Activated CD8-positive, alpha-beta T cell treated with anti-CD3 and anti-CD28 coated beads, Interleukin-2, amount 10 ng/mL, durations not matched to agents 7 days and 5 days (primary cell): ENCODE measurements at regions of chr4 and their contacts with region 1.

Region 1: DNA sequence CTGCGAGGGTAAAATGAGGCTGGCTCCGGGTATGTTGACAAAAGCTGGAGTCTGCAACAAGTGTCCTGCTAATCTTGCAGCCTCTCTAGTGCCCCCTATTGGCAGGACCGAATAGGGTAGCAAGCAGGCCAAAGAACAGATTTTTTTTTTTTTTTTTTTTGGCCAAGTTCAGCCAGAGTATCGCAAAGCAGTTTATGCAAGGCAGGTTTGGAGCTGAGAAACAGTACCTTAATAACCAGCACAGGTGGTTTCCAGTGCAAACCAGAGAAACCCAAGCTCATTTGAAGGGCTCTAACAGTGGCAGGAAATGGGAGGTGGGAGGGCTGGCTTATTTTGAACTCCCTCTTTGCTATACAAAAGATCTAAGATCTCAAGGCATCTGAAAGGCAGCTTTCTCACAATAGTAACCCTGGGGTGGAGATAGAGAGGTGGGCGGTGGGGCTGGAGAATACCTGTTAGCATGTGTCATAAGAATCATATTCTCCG is 38.2 kb upstream of the OCIAD2 start:
- DNase-seq: peak; percentile 66
- ATAC-seq: peak; percentile 36
- H3K4me3 Mint-ChIP-seq: no peak overlapping the region
- H3K27ac Mint-ChIP-seq: no peak overlapping the region
- H3K4me1 Mint-ChIP-seq: peaks cover 12% of the 10 kb centered on the region
- H3K27me3 Mint-ChIP-seq: peaks cover 13% of the 10 kb centered on the region

Region 2: GRCh38 chr4:48906206-48907173 is 38.3 kb before region 1 on chr4 and contains the start of gene OCIAD2:
- CTCF ChIA-PET with region 1: interaction called, 11 read pairs
- POLR2A ChIA-PET with region 1: no interaction called
- DNase-seq: peak; percentile 89
- ATAC-seq: peak; percentile 96
- H3K4me3 Mint-ChIP-seq: peak within 1 kb of the TSS; percentile 88
- H3K27ac Mint-ChIP-seq: peak within 1 kb of the TSS; percentile 85
- H3K4me1 Mint-ChIP-seq: peaks cover 36% of the 10 kb centered on the region
- H3K27me3 Mint-ChIP-seq: no peaks in the 10 kb centered on the region
- total RNA-seq, gene OCIAD2: 77.3 to 92.7 TPM

Region 3: DNA sequence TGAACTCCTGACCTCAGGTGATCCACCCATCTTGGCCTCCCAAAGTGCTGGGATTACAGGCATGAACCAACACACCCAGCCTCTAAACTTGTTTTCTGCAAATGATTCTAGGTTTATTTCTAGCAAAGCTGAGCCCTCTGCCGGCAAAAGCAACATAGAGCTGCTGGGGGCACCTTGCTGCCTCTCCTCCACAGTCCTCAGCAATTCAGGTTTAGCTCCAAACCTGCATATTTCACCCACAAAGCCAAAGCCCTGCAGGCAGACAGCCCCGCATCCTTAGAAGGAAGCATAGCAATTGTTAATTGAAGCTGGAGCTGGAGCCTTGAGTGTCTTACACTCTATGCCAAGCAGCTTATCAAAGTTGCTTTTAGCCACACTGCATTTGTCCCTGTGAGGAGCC is 13.3 kb before region 1 on chr4:
- CTCF ChIA-PET with region 1: interaction called, 15 read pairs
- POLR2A ChIA-PET with region 1: interaction called, 6 read pairs
- DNase-seq: no peak
- ATAC-seq: no peak
- H3K4me3 Mint-ChIP-seq: no peak overlapping the region
- H3K27ac Mint-ChIP-seq: no peak overlapping the region
- H3K4me1 Mint-ChIP-seq: no peaks in the 10 kb centered on the region
- H3K27me3 Mint-ChIP-seq: no peaks in the 10 kb centered on the region

Region 4: DNA sequence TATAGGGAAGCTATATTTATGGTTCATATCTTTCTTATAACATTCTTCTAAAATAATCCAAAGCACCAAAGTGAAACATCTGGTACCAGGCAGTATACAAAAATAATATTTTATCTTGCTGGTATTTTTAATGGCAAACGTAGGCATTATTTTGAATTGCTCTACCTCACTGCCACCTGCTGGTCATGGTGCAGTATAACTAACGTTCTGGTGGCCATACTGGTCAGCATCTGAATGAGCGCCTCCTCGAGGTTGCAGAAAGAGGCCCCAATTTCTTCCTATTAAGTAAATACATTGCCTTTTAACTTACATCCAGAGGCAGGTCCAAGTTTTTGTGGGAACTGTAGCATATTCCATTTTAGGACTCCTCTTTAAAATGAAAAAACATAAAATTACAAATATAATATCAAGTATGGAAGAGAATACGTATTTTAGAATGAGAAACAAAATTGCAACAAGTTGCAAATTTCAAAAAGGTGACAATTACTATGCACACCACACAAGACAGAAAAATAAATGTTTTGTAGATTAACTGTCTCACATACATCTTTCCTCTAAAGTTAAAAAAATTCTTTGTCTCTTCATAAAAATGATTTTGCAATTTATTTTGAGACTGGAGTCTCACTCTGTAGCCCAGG is 18.4 kb after region 1 on chr4:
- CTCF ChIA-PET with region 1: interaction called, 14 read pairs
- POLR2A ChIA-PET with region 1: no interaction called
- DNase-seq: peak; percentile 84
- ATAC-seq: peak; percentile 87
- H3K4me3 Mint-ChIP-seq: no peak overlapping the region
- H3K27ac Mint-ChIP-seq: no peak overlapping the region
- H3K4me1 Mint-ChIP-seq: peaks cover 2% of the 10 kb centered on the region
- H3K27me3 Mint-ChIP-seq: peaks cover 2% of the 10 kb centered on the region